ENCODE measurements at regions of chr2 and their contacts with region 1.

Region 1: DNA sequence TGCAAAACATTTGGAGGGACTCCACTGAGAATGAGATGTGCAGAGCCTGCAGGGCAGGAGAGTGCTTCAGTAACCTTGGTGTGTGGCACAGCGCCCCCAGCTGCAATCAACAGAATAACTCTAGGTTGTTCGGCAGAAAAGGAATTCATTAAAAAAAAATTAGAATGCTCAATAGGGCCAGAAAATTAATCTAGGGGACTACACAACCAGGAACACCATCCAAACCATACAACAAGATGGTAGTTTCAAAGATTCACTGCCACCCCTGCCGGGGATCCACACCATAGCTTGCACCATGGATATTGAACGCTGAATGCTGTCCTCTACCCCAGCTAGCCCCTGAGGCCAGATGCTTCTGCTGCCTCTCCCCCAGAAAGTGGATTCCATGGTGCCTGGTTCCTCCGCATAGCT is 50.1 kb downstream of the THUMPD2 start:
- DNase-seq: no peak
- H3K4me3 ChIP-seq: no peak overlapping the region
- H3K27ac ChIP-seq: no peak overlapping the region
- H3K27me3 ChIP-seq: no peaks in the 10 kb centered on the region
- CTCF ChIP-seq: peak; percentile 75

Region 2: DNA sequence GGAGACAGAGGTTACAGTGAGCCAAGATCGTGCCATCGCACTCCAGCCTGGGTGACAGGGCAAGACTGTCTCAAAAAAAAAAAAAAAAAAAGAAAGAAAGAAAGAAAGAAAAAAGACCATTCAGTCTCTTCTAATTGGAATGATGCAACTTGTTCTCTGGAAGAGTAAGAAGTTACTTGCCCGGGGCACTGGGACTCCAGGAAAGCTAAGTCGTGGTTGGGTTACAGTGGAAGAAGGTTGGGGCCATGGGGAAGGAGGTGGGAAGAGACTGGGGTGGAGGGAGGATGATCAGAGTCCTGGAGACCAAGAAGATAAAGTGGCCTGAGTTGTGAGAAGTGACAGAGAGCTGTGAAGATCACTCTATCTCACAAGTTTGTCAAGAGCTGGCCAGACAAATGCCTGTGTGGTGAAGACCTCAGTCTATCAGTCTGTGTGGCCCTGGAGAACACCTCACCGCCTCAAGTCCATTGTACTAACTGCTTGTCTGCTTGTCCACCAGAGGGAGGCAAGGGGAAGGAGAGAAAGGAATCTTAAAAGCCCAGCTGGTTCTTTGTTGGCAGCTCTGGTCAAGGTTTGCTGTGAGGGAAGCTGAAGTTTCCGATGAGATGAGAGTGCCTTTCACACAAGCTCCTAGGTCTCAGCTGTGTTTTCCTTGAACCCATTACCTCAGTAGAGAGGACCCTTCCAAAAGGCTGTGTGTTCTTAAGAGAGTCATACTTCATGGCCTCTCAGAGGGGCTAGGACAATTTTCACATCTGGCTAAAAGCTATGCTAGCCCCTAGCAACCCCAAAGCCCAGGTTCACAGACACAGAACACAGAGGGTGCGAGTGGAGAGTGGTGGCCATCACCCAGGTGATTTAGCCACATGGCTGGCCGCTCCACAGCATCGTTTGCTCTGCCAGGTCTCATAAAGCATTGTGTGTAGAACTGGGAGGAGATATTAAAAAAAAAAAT is 135.2 kb before region 1 on chr2:
- CTCF ChIA-PET with region 1: interaction called, 32 read pairs
- POLR2A ChIA-PET with region 1: no interaction called
- DNase-seq: peak; percentile 73
- H3K4me3 ChIP-seq: no peak overlapping the region
- H3K27ac ChIP-seq: no peak overlapping the region
- H3K27me3 ChIP-seq: no peaks in the 10 kb centered on the region
- CTCF ChIP-seq: peak; percentile 89

Region 3: GRCh38 chr2:39743269-39743776 is 14.4 kb after region 1 on chr2:
- CTCF ChIA-PET with region 1: interaction called, 10 read pairs
- POLR2A ChIA-PET with region 1: no interaction called
- DNase-seq: no peak
- H3K4me3 ChIP-seq: no peak overlapping the region
- H3K27ac ChIP-seq: peak overlapping the region; percentile 59
- H3K27me3 ChIP-seq: no peaks in the 10 kb centered on the region
- CTCF ChIP-seq: no peak